Left cardiac atrium (tissue), 4 donors: ENCODE measurements at regions of chr5 and their contacts with region 1.

Region 1: DNA sequence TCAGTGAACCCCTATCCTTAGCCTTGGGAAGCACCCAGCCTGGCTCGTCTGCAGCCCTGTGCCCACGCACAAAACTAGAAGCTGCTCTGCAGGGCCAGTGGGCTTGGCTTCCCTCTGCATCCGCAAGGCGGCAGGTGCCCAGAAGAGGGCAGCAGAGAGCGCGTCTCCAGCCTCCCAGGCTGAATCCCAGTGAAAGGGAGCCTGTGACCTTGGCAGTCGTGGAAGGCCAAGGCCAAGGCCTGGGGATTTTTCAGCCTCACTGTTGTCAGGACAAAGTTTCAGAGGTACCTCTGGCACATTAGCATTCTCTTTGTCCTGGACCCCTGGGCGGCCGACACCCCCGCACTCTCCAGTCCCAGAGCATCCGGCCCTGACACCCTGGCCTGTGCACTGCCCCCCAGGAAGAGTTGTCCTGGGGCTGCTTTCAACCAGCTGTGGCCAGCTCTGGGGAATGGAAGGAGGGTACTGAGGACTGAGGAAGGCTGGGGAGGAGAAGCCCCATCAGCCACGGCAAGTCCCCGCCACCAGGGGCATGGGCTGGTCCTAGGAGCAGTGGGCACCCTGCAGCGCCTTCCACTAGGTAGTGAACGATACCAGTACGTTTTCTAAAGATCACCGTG is 63.6 kb upstream of the IL17B start:
- DNase-seq: peak; percentile 82
- ATAC-seq: peak; percentile 80 to 88

Region 2: GRCh38 chr5:149500922-149501582 is 58.4 kb after region 1 on chr5:
- intact Hi-C with region 1: loop called in 1 of 2 experiments (anchors 5 kb)
- DNase-seq: no peak
- ATAC-seq: no peak

Region 3: DNA sequence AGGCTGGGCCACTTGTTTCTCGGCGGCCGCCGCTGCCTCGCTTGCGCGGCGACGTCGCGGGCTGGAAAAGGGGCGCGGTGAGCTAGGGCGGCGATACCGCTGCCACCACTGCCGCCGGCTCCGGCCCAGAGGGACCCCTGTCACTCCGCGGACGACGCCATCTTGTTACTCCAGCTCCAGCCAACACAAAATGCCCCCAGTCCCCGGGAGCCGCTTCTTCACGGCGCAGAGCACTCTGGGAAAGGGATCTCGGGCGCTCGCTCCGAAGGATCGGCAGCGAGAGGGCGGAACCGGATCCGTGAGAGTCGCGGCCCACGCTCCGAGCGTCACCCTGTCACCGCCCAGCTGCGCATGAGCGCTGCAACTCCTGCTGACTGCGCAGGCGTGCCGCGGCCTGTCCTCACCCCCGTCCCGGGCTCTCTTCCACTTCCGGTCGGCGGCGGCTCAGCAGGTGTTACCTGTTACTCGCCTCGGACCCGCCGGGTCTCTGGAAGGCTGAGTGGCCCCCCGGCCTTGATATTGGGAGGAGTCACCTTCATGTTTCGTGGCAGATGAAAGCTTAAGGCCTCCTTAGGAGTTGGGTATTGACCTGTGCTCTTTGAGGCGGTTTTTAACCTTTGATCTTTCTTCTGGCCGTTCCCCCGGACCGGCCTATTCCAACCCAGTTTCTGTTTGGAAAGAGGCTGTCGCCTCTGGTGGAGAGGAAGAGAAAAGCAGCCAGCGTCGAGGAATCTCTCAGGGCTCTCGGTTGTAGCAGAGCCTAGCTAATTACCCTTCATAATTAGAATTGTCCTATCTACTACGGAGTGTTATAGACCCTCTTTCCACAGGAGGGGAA is 108.7 kb after region 1 on chr5 and contains the start of gene CSNK1A1:
- intact Hi-C with region 1: loop called in 1 of 2 experiments (anchors 2 kb)
- DNase-seq: peak; percentile 99
- ATAC-seq: peak; percentile 97 to 98
- total RNA-seq, gene CSNK1A1: 212 to 342 TPM

Region 4: GRCh38 chr5:149561848-149562247 is 119.2 kb after region 1 on chr5:
- intact Hi-C with region 1: loop called in 1 of 2 experiments (anchors 5 kb)
- DNase-seq: no peak
- ATAC-seq: peak; percentile 87 to 95

Region 5: GRCh38 chr5:149618581-149619251 is 176.0 kb after region 1 on chr5:
- intact Hi-C with region 1: loop called in 1 of 2 experiments (anchors 5 kb)
- DNase-seq: no peak
- ATAC-seq: peak; percentile 73 to 76

Region 6: DNA sequence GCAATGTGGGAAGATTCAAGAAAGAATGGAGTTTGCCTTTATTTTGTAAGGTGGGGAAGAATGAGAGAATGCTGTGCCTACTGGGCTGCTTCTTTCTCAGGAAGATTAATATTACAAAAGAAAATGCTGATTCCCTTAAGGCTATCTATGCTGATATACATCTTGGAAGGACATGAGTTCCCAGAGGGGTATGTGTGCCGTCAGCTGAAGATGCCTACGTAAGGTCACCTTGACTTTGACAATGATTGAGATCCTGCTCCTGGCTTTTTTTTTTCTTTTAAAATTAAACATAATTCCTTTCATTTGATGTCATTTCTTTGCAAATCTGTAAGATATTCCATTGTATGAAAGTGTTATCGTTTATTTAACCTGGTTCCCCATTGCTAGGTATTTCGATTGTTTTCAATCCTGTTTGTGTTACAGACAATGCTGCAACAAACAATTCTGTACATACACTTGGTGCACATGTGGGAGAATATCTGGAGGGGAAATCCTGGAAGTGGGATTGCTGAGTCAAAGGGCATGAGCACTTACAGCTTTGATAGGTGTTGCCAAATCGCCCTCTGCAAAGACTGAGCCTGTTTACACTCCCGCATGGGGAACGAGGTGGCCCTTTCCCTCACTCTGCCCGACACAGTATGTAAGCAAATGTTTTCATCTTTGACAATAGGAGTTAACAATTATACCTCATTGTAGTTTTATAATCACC is 435.5 kb after region 1 on chr5:
- intact Hi-C with region 1: no loop called
- DNase-seq: no peak
- ATAC-seq: no peak